ENCODE measurements at regions of chr18 and their contacts with region 1.

Region 1: DNA sequence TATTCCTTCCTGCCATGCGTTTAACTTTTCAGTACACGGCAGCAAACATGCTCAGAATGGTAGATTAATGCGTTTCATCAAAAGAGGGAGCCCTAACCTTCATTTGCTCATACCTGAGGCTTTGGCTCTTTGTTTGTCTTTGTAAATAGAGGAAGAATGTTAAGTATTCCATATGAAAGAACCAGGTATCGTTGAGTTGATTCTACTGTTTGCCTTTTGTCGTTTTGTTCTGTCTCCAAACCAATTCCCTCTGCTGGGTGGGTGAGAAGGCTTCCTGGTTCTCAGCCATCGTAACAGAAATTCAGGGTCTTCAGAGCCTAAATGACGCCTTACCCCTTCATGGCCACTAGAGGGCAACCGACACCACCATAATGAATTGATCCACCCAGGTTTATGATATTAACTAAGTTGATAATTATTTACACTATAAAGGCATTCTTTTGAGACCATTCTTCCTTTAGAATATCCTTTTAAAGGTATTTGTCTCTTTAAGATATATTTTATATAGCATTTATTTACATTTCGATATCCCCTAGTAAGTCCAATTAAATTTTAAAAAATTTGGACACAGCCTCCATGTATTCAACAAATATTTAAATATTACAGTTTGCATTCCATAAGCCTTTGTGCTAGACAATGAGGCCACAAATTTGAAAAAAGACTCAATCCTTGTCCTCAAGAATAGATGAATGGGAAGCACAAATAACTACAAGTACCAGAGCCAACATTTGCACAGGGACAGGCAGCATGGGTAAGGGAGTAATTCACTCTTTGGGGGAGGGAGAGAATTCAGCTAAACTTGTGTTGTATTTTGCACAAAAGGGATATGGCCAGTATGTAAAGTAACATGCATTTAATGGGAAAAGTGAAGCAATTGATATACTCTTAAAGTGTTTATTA is 48.1 kb downstream of the TIMM21 start:
- DNase-seq: peak; percentile 60
- ATAC-seq: peak; percentile 87
- H3K4me3 Mint-ChIP-seq: peak overlapping the region; percentile 52
- H3K27ac Mint-ChIP-seq: peak overlapping the region; percentile 28
- H3K4me1 Mint-ChIP-seq: peaks cover 6% of the 10 kb centered on the region
- H3K27me3 Mint-ChIP-seq: peaks cover 9% of the 10 kb centered on the region

Region 2: DNA sequence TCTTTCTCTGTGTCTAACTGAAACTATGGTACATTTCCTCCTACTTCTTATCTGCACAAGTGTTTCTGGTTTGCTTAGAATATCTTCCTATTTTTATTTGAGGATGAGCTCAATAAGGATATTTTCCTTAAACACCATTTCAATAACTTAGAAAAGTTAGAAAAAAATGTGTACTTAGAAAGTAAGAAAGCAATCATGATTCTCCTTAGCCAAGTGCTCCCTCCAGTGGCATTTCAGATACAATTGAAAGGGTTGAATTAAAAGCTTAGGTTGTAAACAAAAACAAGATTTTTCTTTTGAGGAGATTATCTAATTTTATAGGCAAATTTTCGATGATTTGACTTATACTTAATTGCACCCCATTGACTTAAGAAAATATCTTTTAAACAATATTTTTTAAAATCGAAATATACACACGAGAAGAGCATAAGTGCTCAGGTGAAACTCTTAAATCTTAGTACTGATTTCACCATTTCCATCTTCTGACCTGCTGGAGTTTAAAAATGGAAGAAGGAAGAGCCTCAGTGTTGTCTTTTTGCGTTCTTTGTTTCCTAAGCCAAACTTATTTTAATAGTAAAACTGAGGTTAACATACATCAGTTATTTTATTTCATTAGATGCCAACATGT is 146.1 kb after region 1 on chr18:
- CTCF ChIA-PET with region 1: interaction called, 18 read pairs
- DNase-seq: no peak
- ATAC-seq: no peak
- H3K4me3 Mint-ChIP-seq: no peak overlapping the region
- H3K27ac Mint-ChIP-seq: no peak overlapping the region
- H3K4me1 Mint-ChIP-seq: peaks cover 2% of the 10 kb centered on the region
- H3K27me3 Mint-ChIP-seq: peaks cover 26% of the 10 kb centered on the region

Region 3: GRCh38 chr18:74551936-74552555 is 355.6 kb after region 1 on chr18:
- CTCF ChIA-PET with region 1: interaction called, 16 read pairs
- DNase-seq: peak; percentile 85
- ATAC-seq: peak; percentile 97
- H3K4me3 Mint-ChIP-seq: no peak overlapping the region
- H3K27ac Mint-ChIP-seq: no peak overlapping the region
- H3K4me1 Mint-ChIP-seq: peaks cover 2% of the 10 kb centered on the region
- H3K27me3 Mint-ChIP-seq: peaks cover 24% of the 10 kb centered on the region